HAP-1 (cell line): ENCODE measurements at regions of chr6 and their contacts with region 1.

Region 1: GRCh38 chr6:21593412-21593926 is at the start of gene SOX4:
- DNase-seq: peak; percentile 98
- H3K4me3 ChIP-seq: peak within 1 kb of the TSS; percentile 77
- H3K4me1 ChIP-seq: peaks cover 5% of the 10 kb centered on the region
- H3K27me3 ChIP-seq: no peaks in the 10 kb centered on the region

Region 2: GRCh38 chr6:20564777-20565176 is 1028.7 kb before region 1 on chr6:
- in situ Hi-C with region 1: loop called (anchors 5 kb)
- DNase-seq: no peak
- H3K4me3 ChIP-seq: no peak overlapping the region
- H3K4me1 ChIP-seq: peaks cover 24% of the 10 kb centered on the region
- H3K27me3 ChIP-seq: no peaks in the 10 kb centered on the region

Region 3: GRCh38 chr6:20873425-20874190 is 719.9 kb before region 1 on chr6:
- in situ Hi-C with region 1: loop called (anchors 25 kb)
- DNase-seq: no peak
- H3K4me3 ChIP-seq: no peak overlapping the region
- H3K4me1 ChIP-seq: peaks cover 4% of the 10 kb centered on the region; the same call in 1 of the 2 replicates
- H3K27me3 ChIP-seq: no peaks in the 10 kb centered on the region

Region 4: DNA sequence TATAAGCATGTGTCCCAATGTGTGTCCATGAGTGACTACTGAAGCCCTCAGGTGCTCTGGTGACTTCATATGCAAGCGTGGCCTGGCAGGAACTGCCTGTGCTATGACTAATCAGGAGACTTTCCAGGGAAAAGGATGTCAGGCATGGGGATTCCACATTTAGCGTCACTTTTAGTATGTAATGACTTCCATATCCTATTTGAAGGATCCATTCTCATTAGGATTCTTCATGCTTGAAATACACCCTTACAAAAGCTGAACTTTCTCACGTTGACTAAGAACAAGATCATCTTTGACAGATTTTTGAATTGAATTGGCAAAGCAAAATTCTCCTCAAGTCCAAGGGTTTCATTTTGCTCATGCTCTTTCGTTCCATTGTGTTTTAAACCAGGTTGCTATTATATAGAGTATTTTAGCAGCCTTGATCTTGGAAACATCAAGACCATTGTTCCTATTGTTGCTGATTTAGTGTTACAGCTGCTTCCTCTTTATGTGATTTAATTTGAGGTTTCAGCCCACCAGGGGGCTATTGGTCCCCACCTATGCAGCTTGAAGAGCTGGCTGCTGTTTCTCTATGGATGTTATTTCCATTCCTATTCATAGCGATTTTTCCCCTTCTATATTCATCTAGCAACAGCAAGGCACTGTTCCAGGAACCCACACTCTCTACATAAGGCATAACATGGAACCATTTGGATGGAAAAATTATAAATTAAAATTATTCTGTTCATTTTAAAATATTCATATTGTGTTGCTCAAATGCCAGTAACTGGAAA is 640.6 kb before region 1 on chr6:
- in situ Hi-C with region 1: loop called (anchors 25 kb)
- DNase-seq: peak; percentile 61 to 75
- H3K4me3 ChIP-seq: no peak overlapping the region
- H3K4me1 ChIP-seq: peaks cover 29% of the 10 kb centered on the region
- H3K27me3 ChIP-seq: no peaks in the 10 kb centered on the region

Region 5: DNA sequence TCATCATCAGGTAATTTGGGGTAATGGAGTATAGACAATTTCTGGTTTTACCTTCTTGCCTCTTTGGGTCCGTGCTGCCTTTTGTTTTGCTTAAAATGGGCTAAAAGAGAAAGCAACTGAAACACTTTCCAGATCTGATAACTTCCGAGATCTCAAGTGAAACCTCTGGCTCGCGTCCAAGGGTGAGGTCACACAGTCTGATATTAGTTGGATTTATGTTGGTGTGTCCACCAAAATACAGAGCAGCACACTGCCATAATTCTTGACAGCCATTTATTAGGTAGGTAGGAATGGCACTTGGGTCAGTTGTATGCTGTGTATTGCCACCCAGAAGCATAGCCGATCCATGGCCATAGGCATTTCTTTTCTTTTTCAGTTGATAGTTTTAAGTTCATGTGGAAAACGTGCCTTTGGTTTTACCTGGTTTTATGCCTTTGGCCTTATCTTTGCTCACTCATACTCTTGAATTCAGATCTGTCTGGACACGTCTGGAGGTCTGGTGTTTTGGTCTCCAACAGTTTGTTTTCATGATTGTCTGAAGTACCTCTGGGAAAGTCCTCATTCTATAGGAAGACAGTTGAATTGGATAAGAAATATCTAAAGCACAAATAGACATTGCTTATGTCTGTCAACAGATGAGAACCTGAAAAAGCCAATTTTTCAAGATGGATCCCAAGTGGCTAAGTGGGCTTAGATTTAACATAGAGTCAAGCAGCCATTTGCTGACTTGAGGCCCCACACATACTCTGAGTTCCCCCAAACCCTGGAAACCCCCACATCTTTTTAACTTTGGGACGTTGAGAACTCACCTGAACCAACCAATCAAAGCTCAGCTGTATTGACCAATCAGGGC is 320.9 kb after region 1 on chr6:
- in situ Hi-C with region 1: no loop called
- DNase-seq: no peak
- H3K4me3 ChIP-seq: no peak overlapping the region
- H3K4me1 ChIP-seq: peaks cover 4% of the 10 kb centered on the region
- H3K27me3 ChIP-seq: no peaks in the 10 kb centered on the region